ENCODE measurements at regions of chr2 and their contacts with region 1.

Region 1: GRCh38 chr2:232581725-232582124 is 31.2 kb downstream of the EIF4E2 start:
- DNase-seq: no peak
- H3K4me3 Mint-ChIP-seq: no peak overlapping the region
- H3K27ac Mint-ChIP-seq: no peak overlapping the region
- H3K4me1 Mint-ChIP-seq: peaks cover 16% of the 10 kb centered on the region
- H3K27me3 Mint-ChIP-seq: no peaks in the 10 kb centered on the region

Region 2: DNA sequence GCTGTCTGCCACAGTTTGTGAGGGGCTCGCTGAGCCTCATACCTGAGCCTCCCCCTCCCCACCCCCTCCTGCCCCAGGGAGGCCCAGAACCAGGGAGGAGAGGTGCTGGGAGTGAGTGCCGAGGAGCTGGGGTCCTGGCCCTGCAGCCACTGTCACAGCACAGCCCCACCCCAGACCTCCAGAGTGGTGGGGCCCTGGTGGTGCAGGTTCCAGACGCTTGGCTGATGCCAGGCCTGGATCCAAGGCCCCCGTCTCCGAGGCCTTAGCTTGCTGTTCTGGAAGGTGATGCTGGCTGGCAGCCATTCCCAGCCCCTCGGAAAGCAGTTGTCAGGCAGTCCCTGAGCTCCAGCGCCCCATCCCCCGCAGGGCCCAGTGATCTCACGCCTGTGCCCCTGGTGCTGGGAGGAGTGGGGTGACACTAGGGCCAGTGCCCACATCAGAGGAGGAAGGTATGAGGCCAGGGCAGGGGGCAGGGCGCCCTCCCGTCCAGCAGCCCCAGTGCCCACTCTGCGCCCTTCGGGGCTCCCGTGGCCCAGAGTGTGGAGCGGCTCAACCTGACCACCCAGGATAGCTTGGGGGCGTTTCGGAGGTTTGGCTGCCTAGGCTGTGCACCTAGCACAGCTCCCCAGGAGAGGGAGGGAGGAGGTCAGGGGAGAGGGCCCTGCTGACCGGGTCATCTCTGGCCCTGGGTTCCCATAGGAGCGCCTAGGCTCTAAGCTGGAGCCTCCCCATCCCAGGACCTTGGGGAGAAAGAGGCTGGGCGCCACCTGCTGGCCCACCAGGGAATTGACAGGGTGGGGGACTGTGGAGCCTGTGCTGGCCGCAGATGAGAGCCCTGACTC is 256.1 kb before region 1 on chr2:
- CTCF ChIA-PET with region 1: no interaction called
- POLR2A ChIA-PET with region 1: no interaction called
- DNase-seq: peak; percentile 51
- H3K4me3 Mint-ChIP-seq: no peak overlapping the region
- H3K27ac Mint-ChIP-seq: no peak overlapping the region
- H3K4me1 Mint-ChIP-seq: peaks cover 33% of the 10 kb centered on the region
- H3K27me3 Mint-ChIP-seq: no peaks in the 10 kb centered on the region

Region 3: GRCh38 chr2:232592772-232593395 is 11.2 kb after region 1 on chr2:
- CTCF ChIA-PET with region 1: interaction called, 17 read pairs
- POLR2A ChIA-PET with region 1: no interaction called
- DNase-seq: no peak
- H3K4me3 Mint-ChIP-seq: no peak overlapping the region
- H3K27ac Mint-ChIP-seq: no peak overlapping the region
- H3K4me1 Mint-ChIP-seq: peaks cover 8% of the 10 kb centered on the region
- H3K27me3 Mint-ChIP-seq: peaks cover 1% of the 10 kb centered on the region

Measured in activated CD4-positive, alpha-beta T cell treated with anti-CD3 and anti-CD28 coated beads, Interleukin-2, amount 10 ng/mL, durations not matched to agents 7 days and 5 days (primary cell).